ENCODE measurements at regions of chr11 and their contacts with region 1.

Region 1: GRCh38 chr11:131408025-131408640 is 37.7 kb downstream of the NTM start:
- DNase-seq: no peak
- ATAC-seq: peak; percentile 79

Region 2: DNA sequence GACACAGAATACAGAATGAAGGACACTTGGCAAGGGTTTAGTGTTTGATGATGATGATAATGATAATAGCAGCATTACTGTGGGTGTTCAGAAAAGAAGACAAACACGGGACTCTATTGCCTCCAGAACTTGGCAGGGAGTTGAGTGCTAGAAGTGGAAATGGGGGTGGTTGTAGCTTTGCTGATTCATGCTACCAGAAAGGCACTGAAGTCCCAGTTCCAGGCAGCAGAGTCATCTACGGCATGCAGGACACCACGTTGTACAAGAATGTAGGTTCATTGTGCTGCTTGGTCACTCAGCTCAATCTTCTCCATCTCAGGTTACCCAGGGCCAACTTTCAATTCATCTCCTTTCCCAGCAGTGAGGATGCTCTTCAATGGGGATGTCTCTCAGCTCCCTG is 78.0 kb after region 1 on chr11:
- intact Hi-C with region 1: no loop called
- DNase-seq: no peak
- ATAC-seq: no peak

Region 3: DNA sequence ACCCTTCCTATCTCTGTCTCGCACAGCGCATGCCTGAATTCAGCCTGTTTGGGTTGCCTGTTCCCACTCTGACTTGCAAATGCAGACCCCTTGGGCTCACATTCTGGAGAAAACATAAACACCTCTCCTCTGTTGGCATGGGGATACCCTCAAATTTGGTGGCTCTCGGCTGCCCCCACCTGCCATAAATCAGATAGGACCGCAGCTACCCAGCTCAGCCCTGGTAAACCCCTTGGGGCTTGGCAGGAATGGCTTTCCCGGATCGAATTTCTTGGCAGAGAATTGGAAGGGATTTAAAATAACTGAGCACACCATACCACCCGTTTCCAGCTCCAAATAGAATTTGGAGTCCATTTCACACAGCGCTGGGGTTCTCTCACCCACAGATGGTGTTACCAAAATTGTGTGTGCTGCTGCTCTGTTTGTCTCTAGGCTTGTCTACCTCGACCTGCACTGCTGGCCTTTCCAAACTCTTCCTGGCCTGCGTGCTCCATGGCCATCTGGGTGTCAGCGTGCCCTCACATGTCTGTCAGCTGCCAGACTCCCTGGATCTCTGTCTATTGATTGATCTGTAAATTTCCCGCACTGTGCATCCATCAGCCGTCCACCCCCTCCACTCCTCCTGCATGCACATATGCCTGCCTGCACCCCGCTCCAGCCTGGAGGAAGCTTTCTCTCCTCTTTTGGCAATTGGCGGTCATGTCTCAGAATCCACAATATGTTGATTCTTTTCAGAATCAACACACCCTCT is 96.2 kb after region 1 on chr11:
- intact Hi-C with region 1: loop called (anchors 2 kb)
- DNase-seq: no peak
- ATAC-seq: peak; percentile 63

Measured in Right ventricle myocardium inferior (tissue), 1 donor.